CD8-positive, alpha-beta T cell (primary cell): ENCODE measurements at regions of chr2 and their contacts with region 1.

Region 1: GRCh38 chr2:127526149-127527000 is at the start of gene IWS1:
- DNase-seq: peak; percentile 82 to 98 (median 90)
- ATAC-seq: peak; percentile 87
- H3K4me3 ChIP-seq: peak within 1 kb of the TSS; percentile 69 to 75
- H3K4me3 Mint-ChIP-seq: peak within 1 kb of the TSS; percentile 98
- H3K27ac ChIP-seq: peak within 1 kb of the TSS; percentile 91 to 97
- H3K27ac Mint-ChIP-seq: peak within 1 kb of the TSS; percentile 99
- H3K4me1 ChIP-seq: peaks cover 31% of the 10 kb centered on the region
- H3K4me1 Mint-ChIP-seq: peaks cover 37% of the 10 kb centered on the region
- H3K27me3 ChIP-seq: no peaks in the 10 kb centered on the region
- H3K27me3 Mint-ChIP-seq: no peaks in the 10 kb centered on the region
- CTCF ChIP-seq: no peak
- total RNA-seq, gene IWS1: 30.4 to 33.4 TPM

Region 2: GRCh38 chr2:126657636-126658318 is 868.6 kb before region 1 on chr2:
- CTCF ChIA-PET with region 1: no interaction called
- POLR2A ChIA-PET with region 1: no interaction called
- intact Hi-C with region 1: loop called (anchors 10 kb)
- DNase-seq: peak; percentile 49 to 89 (median 79)
- ATAC-seq: peak; percentile 62
- H3K4me3 ChIP-seq: peak overlapping the region; percentile 80 to 96
- H3K4me3 Mint-ChIP-seq: peak overlapping the region; percentile 94
- H3K27ac ChIP-seq: peak overlapping the region; percentile 87 to 89
- H3K27ac Mint-ChIP-seq: peak overlapping the region; percentile 98
- H3K4me1 ChIP-seq: peaks cover 59% of the 10 kb centered on the region
- H3K4me1 Mint-ChIP-seq: peaks cover 75% of the 10 kb centered on the region
- H3K27me3 ChIP-seq: no peaks in the 10 kb centered on the region
- H3K27me3 Mint-ChIP-seq: no peaks in the 10 kb centered on the region
- CTCF ChIP-seq: no peak

Region 3: DNA sequence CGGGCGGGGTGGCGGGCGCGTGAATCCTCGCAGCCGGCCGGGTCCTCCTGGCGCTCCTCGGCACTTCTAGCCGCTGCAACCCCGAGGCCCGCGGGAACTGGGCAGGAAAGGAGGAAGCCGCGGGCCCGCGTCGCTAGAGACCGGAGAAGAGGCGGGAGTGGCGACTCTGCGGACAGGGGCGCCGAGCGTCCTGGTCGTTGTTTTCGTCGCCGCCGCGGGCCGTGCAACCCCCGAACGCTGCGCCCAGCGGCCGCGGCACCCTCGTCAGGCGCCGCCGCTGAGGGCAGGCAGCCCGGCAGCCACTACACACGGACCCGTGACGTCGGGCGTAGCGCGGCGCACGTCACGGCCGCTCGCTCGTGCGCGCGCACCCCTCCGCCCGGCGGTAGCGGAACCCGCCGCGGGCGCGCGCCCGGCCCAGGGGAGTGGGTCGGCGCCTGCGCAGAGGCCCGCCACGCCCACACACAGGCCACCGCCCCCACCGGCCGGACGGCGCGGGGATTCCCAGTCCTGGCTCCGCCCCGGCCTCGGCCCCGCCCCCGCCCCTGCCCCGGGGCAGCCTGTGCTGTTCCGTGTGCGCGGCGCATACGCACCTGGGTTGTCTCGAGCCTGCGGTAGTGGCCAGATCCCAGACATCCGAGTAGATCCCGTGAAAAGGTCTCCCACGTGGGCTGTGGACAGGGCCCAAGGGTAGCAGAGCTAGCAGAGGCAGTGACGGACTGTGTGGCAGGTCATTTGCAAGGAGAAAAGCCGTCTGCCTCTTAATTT is 138.5 kb before region 1 on chr2 and contains the start of gene MAP3K2:
- CTCF ChIA-PET with region 1: no interaction called
- POLR2A ChIA-PET with region 1: interaction called, 5 read pairs
- intact Hi-C with region 1: loop called (anchors 1 kb)
- DNase-seq: peak; percentile 90 to 98 (median 97)
- ATAC-seq: peak; percentile 72
- H3K4me3 ChIP-seq: peak within 1 kb of the TSS; percentile 79 to 81
- H3K4me3 Mint-ChIP-seq: peak within 1 kb of the TSS; percentile 86
- H3K27ac ChIP-seq: peak within 1 kb of the TSS; percentile 99
- H3K27ac Mint-ChIP-seq: peak within 1 kb of the TSS; percentile 99
- H3K4me1 ChIP-seq: peaks cover 36% of the 10 kb centered on the region
- H3K4me1 Mint-ChIP-seq: peaks cover 63% of the 10 kb centered on the region
- H3K27me3 ChIP-seq: no peaks in the 10 kb centered on the region
- H3K27me3 Mint-ChIP-seq: no peaks in the 10 kb centered on the region
- CTCF ChIP-seq: no peak
- total RNA-seq, gene MAP3K2: 126 to 137 TPM

Region 4: DNA sequence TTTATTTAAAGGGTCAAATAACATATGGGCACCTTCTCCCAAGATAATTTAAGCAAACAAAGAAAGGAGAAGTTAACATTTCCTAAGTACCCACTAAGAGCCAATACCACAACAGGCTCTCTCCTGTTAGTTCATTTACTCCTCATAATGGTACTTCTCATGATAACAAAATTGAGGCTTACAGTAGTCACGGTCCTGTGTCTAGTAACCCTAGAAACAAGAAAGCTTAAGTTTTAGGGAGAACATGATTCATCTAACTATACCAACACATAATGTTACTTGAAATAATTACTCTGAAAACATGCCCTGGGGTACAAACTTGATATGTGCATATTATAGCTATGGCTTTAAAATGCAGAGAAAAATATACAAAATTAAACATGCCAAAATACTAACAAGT is 19.9 kb before region 1 on chr2:
- CTCF ChIA-PET with region 1: no interaction called
- POLR2A ChIA-PET with region 1: no interaction called
- intact Hi-C with region 1: loop called in 1 of 2 experiments (anchors 2 kb)
- DNase-seq: no peak
- ATAC-seq: no peak
- H3K4me3 ChIP-seq: no peak overlapping the region
- H3K4me3 Mint-ChIP-seq: no peak overlapping the region
- H3K27ac ChIP-seq: no peak overlapping the region
- H3K27ac Mint-ChIP-seq: no peak overlapping the region
- H3K4me1 ChIP-seq: peaks cover 13% of the 10 kb centered on the region
- H3K4me1 Mint-ChIP-seq: peaks cover 54% of the 10 kb centered on the region
- H3K27me3 ChIP-seq: no peaks in the 10 kb centered on the region
- H3K27me3 Mint-ChIP-seq: no peaks in the 10 kb centered on the region
- CTCF ChIP-seq: no peak

Region 5: DNA sequence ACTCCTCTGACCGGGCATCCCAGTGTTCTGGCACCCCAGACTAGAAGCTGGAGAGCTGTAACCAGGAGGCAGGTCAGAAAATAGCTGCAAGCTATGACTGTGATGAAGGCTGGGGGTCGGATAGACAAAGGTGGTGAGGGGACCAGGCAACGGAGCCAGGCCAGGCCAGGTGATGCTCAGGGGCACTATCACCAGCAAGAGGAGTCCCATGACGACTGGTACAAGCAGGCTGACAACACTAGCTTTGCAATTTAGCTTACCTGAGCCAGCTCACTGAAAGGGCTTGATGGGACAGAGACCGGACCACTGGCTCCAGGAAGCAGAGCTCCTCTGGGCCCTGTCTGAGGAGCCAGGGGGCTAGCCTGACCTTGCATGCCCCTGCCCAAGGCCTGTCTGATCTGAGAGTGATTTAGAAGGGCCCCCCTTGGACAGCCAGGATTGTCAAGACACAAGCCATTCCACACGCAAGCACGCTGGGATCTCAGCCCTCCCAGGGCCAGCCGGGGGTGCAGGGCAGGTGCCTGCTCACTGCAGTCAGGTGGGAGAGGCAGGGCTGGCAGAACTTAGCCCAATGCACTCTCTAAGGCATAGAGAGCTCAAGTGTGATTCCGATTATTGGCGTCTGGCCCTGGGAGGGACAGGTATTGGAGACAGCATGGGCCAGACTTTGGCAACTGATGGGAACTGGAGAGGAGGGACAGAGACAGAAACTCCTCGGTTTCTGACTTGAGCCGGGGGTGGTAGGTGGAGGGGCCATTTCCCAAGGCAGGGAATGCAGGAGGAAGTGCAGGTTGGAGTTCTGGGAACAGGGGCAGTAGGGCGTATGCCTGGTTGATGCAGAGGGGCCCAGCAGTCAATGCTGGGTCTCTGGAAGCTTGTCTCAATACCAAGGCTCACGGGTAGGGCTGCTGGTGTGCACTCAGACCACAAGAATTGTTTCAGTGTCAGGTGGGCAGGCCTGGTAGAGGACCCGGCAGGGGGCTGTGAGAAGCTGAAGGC is 56.8 kb after region 1 on chr2:
- CTCF ChIA-PET with region 1: no interaction called
- POLR2A ChIA-PET with region 1: no interaction called
- intact Hi-C with region 1: no loop called
- DNase-seq: peak in 1 of 9 experiments; percentile 39
- ATAC-seq: no peak
- H3K4me3 ChIP-seq: no peak overlapping the region
- H3K4me3 Mint-ChIP-seq: no peak overlapping the region
- H3K27ac ChIP-seq: no peak overlapping the region
- H3K27ac Mint-ChIP-seq: no peak overlapping the region
- H3K4me1 ChIP-seq: no peaks in the 10 kb centered on the region
- H3K4me1 Mint-ChIP-seq: no peaks in the 10 kb centered on the region
- H3K27me3 ChIP-seq: no peaks in the 10 kb centered on the region
- H3K27me3 Mint-ChIP-seq: no peaks in the 10 kb centered on the region
- CTCF ChIP-seq: no peak

Region 6: DNA sequence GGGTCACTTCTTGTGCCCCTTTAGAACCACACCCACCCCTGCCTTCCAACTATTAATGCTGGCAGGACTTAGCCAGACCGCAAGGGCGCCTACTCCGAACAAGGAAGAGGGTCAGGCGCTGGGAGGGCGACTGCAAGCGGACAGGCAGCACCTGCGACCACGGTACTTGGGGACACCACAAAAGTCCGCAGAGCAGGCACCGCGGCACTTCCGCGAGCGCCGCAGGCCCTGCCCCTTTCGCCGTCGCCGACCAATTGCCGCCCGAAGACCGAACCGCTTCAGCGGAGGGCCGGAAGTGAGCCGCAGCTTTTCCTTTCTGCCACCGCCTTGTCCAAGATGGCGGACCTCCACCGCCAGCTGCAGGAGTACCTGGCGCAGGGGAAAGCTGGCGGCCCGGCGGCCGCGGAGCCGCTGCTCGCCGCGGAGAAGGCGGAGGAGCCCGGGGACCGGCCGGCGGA is 174.8 kb after region 1 on chr2 and contains the start of gene SFT2D3:
- CTCF ChIA-PET with region 1: interaction called, 6 read pairs
- POLR2A ChIA-PET with region 1: interaction called, 8 read pairs
- intact Hi-C with region 1: loop called (anchors 1 kb)
- DNase-seq: peak; percentile 80 to 95 (median 89)
- ATAC-seq: peak; percentile 72
- H3K4me3 ChIP-seq: peak within 1 kb of the TSS; percentile 75 to 98
- H3K4me3 Mint-ChIP-seq: peak within 1 kb of the TSS; percentile 93
- H3K27ac ChIP-seq: peak within 1 kb of the TSS; percentile 92 to 96
- H3K27ac Mint-ChIP-seq: peak within 1 kb of the TSS; percentile 99
- H3K4me1 ChIP-seq: peaks cover 39% of the 10 kb centered on the region
- H3K4me1 Mint-ChIP-seq: peaks cover 46% of the 10 kb centered on the region
- H3K27me3 ChIP-seq: no peaks in the 10 kb centered on the region
- H3K27me3 Mint-ChIP-seq: no peaks in the 10 kb centered on the region
- CTCF ChIP-seq: no peak
- total RNA-seq, gene SFT2D3: 8.2 to 8.5 TPM

Region 7: DNA sequence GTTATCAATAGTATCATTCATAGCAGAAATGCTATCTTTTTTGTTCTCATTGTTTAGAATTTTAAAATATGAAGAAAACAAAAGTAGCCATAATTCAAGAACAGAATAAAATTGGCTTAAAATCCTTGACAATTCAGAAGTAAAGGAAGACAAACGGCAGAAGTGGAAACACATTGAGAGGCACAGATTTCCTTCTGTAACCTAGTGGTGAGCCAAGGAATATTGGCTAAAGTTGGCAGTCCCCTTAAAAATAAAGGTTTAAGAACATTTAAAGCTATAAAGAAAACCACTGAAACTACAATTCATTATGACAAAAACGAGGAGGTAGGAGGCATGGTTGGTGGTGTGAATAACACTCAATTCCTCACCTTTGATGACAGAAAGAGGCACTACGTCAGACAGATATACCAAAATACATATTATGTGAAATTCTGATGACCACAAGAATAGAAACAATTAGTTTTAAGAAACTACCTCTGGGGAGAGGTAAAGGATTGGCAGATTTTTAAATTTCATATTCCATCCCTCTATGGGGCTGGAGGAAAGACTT is 217.2 kb after region 1 on chr2:
- CTCF ChIA-PET with region 1: no interaction called
- POLR2A ChIA-PET with region 1: no interaction called
- intact Hi-C with region 1: no loop called
- DNase-seq: no peak
- ATAC-seq: no peak
- H3K4me3 ChIP-seq: no peak overlapping the region
- H3K4me3 Mint-ChIP-seq: no peak overlapping the region
- H3K27ac ChIP-seq: no peak overlapping the region
- H3K27ac Mint-ChIP-seq: peak overlapping the region; percentile 5
- H3K4me1 ChIP-seq: no peaks in the 10 kb centered on the region
- H3K4me1 Mint-ChIP-seq: peaks cover 10% of the 10 kb centered on the region
- H3K27me3 ChIP-seq: no peaks in the 10 kb centered on the region
- H3K27me3 Mint-ChIP-seq: no peaks in the 10 kb centered on the region
- CTCF ChIP-seq: no peak

Region 8: DNA sequence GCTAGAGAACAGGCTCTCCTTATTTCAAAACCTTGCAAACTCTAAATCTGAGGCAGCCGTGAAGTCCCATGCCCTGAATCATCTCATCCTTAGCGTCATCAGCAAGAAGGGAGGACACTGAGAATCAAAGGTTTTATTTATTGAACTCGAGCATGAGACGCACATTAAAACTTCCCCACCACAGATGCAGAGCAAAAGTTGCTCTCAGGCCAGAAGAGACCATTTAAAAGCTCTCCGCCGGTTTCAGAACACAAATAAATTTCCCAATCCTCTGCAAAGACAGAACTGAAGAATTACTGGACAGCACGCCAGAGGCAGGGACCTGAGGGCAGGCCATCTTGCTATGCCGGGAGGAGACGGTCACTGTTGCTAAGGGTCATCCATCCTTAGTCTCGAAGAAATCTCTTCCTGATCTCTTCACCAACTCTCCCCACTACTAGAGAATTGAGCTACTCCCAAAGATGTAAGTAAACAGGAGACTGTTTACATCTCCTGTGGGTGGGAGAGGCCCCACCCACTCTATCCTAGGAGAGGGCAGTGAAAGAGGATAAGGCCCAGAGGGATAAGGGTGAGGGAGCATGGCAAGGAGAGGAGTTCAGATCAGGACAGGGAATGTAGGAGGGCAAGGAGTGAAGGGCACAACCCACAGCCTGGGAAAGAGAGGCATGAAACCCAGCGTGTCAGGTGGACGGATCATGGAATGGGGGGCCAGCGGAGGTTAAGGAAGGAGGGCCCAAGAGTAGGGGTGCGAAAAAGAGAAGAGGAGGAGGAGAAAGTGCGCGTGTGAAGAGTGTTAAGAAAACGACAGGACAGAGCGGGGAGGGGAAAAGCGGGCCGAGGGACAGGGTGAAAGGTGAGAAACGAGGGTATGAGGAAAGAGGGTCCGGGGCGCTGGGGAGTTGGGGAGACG is 358.3 kb after region 1 on chr2:
- CTCF ChIA-PET with region 1: no interaction called
- POLR2A ChIA-PET with region 1: no interaction called
- intact Hi-C with region 1: loop called in 1 of 2 experiments (anchors 5 kb)
- DNase-seq: peak in 1 of 9 experiments; percentile 9
- ATAC-seq: no peak
- H3K4me3 ChIP-seq: peak overlapping the region; percentile 38
- H3K4me3 Mint-ChIP-seq: peak overlapping the region; percentile 86
- H3K27ac ChIP-seq: no peak overlapping the region
- H3K27ac Mint-ChIP-seq: peak overlapping the region; percentile 87
- H3K4me1 ChIP-seq: peaks cover 22% of the 10 kb centered on the region
- H3K4me1 Mint-ChIP-seq: peaks cover 66% of the 10 kb centered on the region
- H3K27me3 ChIP-seq: no peaks in the 10 kb centered on the region
- H3K27me3 Mint-ChIP-seq: no peaks in the 10 kb centered on the region
- CTCF ChIP-seq: no peak